ENCODE measurements at regions of chr10 and their contacts with region 1.

Region 1: DNA sequence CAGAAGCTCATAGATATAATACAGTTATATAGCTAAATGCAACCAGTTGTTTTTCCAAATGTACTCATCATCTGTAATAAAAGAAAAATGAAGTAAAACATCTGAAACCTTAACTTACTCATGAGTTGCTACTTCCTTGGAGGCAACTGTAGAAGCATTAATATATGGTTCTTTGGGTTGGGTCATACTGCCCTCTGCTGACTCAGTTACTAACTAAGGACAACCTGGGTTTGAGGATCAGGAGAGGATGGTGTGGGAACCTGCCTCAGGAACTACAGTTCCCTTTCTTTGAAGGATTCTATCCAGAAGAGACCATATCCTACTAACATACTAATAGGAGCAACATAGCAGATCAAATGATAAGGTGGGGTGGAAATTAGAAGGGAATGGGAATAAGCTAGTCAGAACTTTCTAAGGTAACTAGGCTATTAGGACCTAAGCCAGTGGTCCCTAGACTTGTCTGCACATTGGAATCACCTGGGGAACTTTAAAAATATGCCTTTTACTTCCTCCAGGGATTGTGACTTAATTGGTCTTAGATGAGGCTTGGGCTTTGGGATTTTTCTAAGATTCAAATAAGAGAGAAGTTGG is 20.7 kb downstream of the COX15 start:
- DNase-seq: peak; percentile 20 to 45 (median 27)
- ATAC-seq: peak; percentile 63
- H3K4me3 ChIP-seq: no peak overlapping the region
- H3K27ac ChIP-seq: no peak overlapping the region
- H3K4me1 ChIP-seq: no peaks in the 10 kb centered on the region
- H3K27me3 ChIP-seq: no peaks in the 10 kb centered on the region
- CTCF ChIP-seq: peak in 6 of 7 experiments; percentile 24 to 48 (median 43)
- POLR2A ChIP-seq: no peak

Region 2: DNA sequence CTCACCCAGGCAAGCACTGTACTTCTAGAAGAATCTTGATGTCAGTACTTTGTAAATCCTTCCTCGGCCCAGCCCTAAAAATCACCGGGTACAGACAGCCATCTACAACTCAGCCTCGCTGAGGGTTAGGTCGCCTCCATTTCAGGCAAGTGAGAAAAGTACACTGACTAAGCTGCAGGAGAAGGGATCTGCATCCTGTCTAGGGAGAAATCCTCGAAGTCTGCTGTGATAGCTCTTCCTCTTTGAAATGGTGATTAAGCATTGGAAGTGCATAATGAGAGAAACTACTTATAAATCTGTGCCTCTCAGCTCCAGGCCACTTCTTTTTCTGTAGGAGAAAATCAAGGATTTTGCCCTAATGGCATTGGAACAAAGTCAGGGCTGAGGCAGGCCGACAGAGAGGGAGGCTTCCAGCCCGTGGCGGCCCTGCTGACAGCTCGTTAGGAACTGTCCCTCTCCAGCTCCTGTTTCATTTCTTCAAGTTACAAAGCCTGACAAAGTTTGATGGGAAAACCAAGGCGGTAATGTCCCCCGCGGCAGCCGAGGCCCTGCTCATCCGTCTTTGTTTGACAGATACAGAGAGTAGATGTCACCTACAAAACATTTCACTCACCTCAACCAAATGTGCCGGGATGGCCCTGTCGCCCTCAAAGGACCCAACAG is 266.7 kb before region 1 on chr10:
- intact Hi-C with region 1: loop called (anchors 10 kb)
- DNase-seq: no peak
- ATAC-seq: no peak
- H3K4me3 ChIP-seq: no peak overlapping the region
- H3K27ac ChIP-seq: no peak overlapping the region
- H3K4me1 ChIP-seq: no peaks in the 10 kb centered on the region
- H3K27me3 ChIP-seq: no peaks in the 10 kb centered on the region
- CTCF ChIP-seq: no peak
- POLR2A ChIP-seq: no peak

Region 3: GRCh38 chr10:99667108-99667751 is 44.0 kb before region 1 on chr10:
- intact Hi-C with region 1: no loop called
- DNase-seq: peak in 2 of 4 donors; percentile 16 to 20
- ATAC-seq: peak; percentile 65
- H3K4me3 ChIP-seq: no peak overlapping the region
- H3K27ac ChIP-seq: peak overlapping the region; percentile 36 to 71 (median 40)
- H3K4me1 ChIP-seq: peaks cover 40% of the 10 kb centered on the region
- H3K27me3 ChIP-seq: no peaks in the 10 kb centered on the region
- CTCF ChIP-seq: no peak
- POLR2A ChIP-seq: no peak

Region 4: GRCh38 chr10:100858747-100859483 is 1147.7 kb after region 1 on chr10:
- intact Hi-C with region 1: no loop called
- DNase-seq: no peak
- ATAC-seq: no peak
- H3K4me3 ChIP-seq: no peak overlapping the region
- H3K27ac ChIP-seq: no peak overlapping the region
- H3K4me1 ChIP-seq: no peaks in the 10 kb centered on the region
- H3K27me3 ChIP-seq: peaks cover 0 to 4% of the 10 kb centered on the region in 2 donors
- CTCF ChIP-seq: no peak
- POLR2A ChIP-seq: no peak